ENCODE measurements at regions of chr14 and their contacts with region 1.

Region 1: DNA sequence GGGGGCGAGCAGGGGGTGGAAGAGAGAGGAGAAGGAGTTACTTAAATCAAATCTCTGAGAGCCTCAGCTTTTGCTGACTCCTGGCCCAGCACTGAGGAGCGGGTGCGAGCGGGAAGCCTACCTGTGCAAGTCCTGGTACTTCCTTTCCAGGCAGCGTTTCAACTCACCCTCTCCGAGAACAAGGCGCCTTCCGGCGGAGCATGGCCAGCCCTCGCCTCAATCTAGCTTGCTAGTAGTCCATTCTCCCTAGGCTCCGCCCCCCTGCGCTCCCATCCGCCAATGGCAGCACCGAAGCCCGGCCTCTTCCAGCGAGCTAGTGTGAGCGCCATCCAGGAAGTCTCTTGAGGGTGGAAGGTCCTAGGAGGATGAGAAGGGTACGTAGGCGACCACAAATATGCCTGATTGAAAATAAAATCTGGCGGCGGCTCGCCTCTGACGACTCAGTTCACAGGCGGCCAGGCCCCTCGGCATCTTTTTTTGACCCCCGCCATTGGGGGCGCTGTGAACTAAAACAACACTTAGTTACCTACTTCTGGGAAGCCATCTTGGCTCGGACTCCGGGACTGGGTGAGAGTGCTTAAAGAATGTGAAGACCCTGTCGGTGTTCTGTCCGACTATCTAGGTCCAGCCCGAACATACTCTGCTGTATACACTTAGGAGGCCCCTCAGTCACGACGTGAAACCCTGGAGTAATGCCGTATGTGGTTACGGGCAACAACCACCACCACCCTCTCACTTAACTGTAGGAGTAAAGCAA is at the start of gene CHD8:
- DNase-seq: peak; percentile 98 to 100
- H3K4me3 ChIP-seq: peak within 1 kb of the TSS; percentile 87 to 98 (median 94)
- H3K27ac ChIP-seq: peak within 1 kb of the TSS; percentile 90
- H3K4me1 ChIP-seq: peaks cover 0 to 4% (median 1%) of the 10 kb centered on the region in 4 experiments; a peak in 3 of 7 replicates
- H3K27me3 ChIP-seq: no peaks in the 10 kb centered on the region
- CTCF ChIP-seq: peak; percentile 46 to 74 (median 67)
- EP300 ChIP-seq: no peak
- POLR2A ChIP-seq: peak; percentile 79 to 99
- RAD21 ChIP-seq: peak; percentile 44 to 52
- total RNA-seq, gene CHD8: 140 TPM in 2 replicates

Region 2: DNA sequence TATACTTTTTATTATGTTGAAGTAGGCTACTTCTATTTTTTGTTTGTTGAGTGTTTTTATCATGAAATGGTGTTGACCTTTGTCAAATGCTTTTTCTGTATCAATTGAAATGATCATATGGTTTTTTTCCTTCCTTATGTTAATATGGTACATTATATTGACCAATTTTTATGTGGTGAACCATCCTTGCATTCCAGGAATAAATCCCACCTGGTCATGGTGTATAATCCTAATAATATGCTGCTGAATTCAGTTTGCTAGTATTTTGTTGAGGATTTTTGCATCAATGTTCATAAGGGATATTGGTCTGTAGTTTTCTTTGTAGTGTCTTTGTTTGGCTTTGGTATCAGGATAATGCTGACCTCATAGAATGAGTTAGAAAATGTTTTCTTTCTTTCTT is 310.7 kb before region 1 on chr14:
- CTCF ChIA-PET with region 1: no interaction called
- POLR2A ChIA-PET with region 1: no interaction called
- DNase-seq: no peak
- H3K4me3 ChIP-seq: no peak overlapping the region
- H3K27ac ChIP-seq: no peak overlapping the region
- H3K4me1 ChIP-seq: no peaks in the 10 kb centered on the region
- H3K27me3 ChIP-seq: no peaks in the 10 kb centered on the region
- CTCF ChIP-seq: no peak
- EP300 ChIP-seq: no peak
- POLR2A ChIP-seq: no peak
- RAD21 ChIP-seq: no peak

Region 3: GRCh38 chr14:21467616-21468015 is 11.5 kb after region 1 on chr14:
- CTCF ChIA-PET with region 1: interaction called, 12 read pairs
- POLR2A ChIA-PET with region 1: interaction called, 21 read pairs
- DNase-seq: no peak
- H3K4me3 ChIP-seq: no peak overlapping the region
- H3K27ac ChIP-seq: no peak overlapping the region
- H3K4me1 ChIP-seq: no peaks in the 10 kb centered on the region
- H3K27me3 ChIP-seq: no peaks in the 10 kb centered on the region
- CTCF ChIP-seq: no peak
- EP300 ChIP-seq: no peak
- POLR2A ChIP-seq: no peak
- RAD21 ChIP-seq: no peak

Region 4: DNA sequence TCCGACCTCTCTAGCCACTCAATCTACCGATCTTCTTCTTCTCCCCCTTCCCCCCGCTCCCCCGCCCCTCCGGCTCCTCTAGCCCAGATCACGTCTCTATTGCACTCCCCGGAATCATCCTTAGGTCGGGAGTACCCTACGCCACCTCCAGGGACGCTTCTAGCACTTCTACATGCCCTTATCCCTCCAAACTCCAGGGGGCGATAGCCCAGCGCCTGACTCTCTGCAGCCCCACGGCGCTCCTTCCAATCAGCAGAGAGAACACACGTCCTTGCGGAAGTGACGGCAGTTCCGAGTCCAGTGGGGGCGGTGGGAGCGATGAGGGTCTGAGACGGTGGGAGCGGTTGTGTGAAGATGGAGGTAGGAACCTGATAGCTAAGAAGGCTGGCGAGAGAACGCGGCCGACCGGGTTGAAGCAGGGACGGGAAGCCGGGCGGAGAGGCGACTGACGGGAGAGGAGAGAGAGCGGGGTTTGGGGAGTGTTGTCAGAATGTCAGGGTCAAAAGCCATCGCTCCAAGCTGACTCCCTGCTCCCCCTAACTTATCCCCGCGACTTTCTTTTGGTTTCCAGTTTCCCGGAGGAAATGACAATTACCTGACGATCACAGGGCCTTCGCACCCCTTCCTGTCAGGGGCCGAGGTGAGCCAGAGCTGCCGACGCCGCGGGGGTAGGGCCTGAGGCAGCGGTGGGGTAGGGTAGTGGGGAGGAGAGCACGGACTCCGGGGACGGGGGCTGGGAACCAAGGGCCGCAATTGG is 21.0 kb after region 1 on chr14 and contains the starts of genes RAB2B and TOX4:
- CTCF ChIA-PET with region 1: interaction called, 16 read pairs
- POLR2A ChIA-PET with region 1: interaction called, 3 read pairs
- DNase-seq: peak; percentile 95 to 96
- H3K4me3 ChIP-seq: peak within 1 kb of the TSS; percentile 88 to 100 (median 96)
- H3K27ac ChIP-seq: peak within 1 kb of the TSS; percentile 36
- H3K4me1 ChIP-seq: no peaks in the 10 kb centered on the region; a peak in 1 of 7 replicates
- H3K27me3 ChIP-seq: no peaks in the 10 kb centered on the region
- CTCF ChIP-seq: peak; percentile 83 to 99 (median 99)
- EP300 ChIP-seq: peak in 1 of 2 experiments; percentile 66; a peak in 2 of 3 replicates
- POLR2A ChIP-seq: peak in 1 of 2 experiments; percentile 71; a peak in 2 of 3 replicates
- RAD21 ChIP-seq: peak; percentile 41 to 53; a peak in 3 of 4 replicates
- total RNA-seq, gene RAB2B: 26.1 and 27.6 TPM in 2 replicates
- total RNA-seq, gene TOX4: 49.5 and 58.3 TPM in 2 replicates